Ovary (tissue), 10 donors: ENCODE measurements at regions of chr11 and their contacts with region 1.

Region 1: GRCh38 chr11:67265633-67266423 is 445 bp upstream of the GRK2 start:
- DNase-seq: peak; percentile 70 to 90 (median 82)
- H3K4me3 ChIP-seq: peak overlapping the region; percentile 16
- H3K27ac ChIP-seq: peak overlapping the region; percentile 67 to 72
- H3K4me1 ChIP-seq: peaks cover 25% of the 10 kb centered on the region
- H3K27me3 ChIP-seq: no peaks in the 10 kb centered on the region
- CTCF ChIP-seq: peak; percentile 59 to 93 (median 91)
- EP300 ChIP-seq: no peak
- POLR2A ChIP-seq: no peak

Region 2: DNA sequence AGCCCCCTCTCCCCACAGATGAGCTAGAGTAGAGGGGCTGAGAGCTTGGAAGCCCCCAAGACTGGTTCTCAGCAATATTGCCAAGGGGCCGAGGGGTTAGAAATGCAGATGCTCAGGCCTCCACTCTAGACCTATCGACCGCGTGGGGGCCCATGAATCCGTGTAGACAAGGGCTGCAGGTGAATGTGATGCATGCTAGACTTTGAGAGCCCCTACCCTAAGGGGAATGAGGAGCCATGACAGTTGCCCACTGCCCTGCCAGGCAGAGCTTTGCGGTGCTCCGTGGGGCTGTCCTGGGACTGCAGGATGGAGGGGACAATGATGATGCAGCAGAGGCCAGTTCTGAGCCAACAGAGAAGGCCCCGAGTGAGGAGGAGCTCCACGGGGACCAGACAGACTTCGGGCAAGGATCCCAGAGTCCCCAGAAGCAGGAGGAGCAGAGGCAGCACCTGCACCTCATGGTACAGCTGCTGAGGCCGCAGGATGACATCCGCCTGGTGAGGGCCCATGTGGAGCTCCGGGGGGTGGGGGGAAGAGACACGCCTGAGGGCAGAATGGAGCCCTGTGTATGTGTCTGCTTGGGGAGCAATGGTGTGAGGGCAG is 38.8 kb after region 1 on chr11:
- intact Hi-C with region 1: loop called in 1 of 4 experiments (anchors 5 kb)
- DNase-seq: peak in 2 of 5 donors; percentile 20 to 33
- H3K4me3 ChIP-seq: peak overlapping the region; percentile 61
- H3K27ac ChIP-seq: peak overlapping the region in 1 of 2 donors; percentile 82
- H3K4me1 ChIP-seq: peaks cover 9% of the 10 kb centered on the region
- H3K27me3 ChIP-seq: no peaks in the 10 kb centered on the region
- CTCF ChIP-seq: no peak
- EP300 ChIP-seq: no peak
- POLR2A ChIP-seq: no peak